ENCODE measurements at regions of chr6 and their contacts with region 1.

Region 1: GRCh38 chr6:100479179-100480035 is 14.7 kb upstream of the SIM1 start:
- DNase-seq: peak; percentile 54
- ATAC-seq: peak; percentile 81
- H3K4me3 ChIP-seq: no peak overlapping the region
- H3K27ac ChIP-seq: no peak overlapping the region
- H3K4me1 ChIP-seq: peaks cover 0 to 8% of the 10 kb centered on the region in 2 experiments; a peak in 2 of 4 replicates
- H3K27me3 ChIP-seq: no peaks in the 10 kb centered on the region
- CTCF ChIP-seq: peak; percentile 61 to 83 (median 82)
- POLR2A ChIP-seq: no peak
- RAD21 ChIP-seq: peak; percentile 90

Region 2: GRCh38 chr6:99588618-99589289 is 890.7 kb before region 1 on chr6:
- CTCF ChIA-PET with region 1: no interaction called
- POLR2A ChIA-PET with region 1: no interaction called
- RAD21 ChIA-PET with region 1: no interaction called
- intact Hi-C with region 1: no loop called
- DNase-seq: no peak
- ATAC-seq: no peak
- H3K4me3 ChIP-seq: no peak overlapping the region
- H3K27ac ChIP-seq: no peak overlapping the region
- H3K4me1 ChIP-seq: no peaks in the 10 kb centered on the region
- H3K27me3 ChIP-seq: no peaks in the 10 kb centered on the region; the same call in 1 of the 2 replicates
- CTCF ChIP-seq: no peak
- POLR2A ChIP-seq: no peak
- RAD21 ChIP-seq: no peak

Region 3: DNA sequence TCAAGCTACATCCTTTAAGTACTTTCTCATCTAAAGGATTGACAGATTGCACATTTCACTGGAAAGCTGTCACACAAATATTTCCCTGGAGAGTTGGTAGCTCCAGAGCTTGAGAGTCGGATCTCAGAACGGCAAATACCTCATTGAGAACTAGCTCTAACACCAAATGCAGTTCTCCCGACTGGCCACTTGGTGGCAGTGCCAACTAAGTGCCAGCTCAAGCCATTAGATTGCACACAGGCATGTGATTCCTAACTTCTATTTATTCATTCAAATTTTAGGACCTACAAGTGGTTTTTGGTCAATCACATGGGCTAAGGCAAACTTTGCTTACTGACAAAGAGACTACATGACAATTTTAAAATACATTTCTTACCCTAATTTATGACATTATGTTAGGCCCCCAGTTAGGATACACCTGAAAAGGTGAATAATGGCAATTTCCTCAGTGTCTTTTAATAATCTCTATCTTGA is 477.5 kb before region 1 on chr6:
- CTCF ChIA-PET with region 1: no interaction called
- POLR2A ChIA-PET with region 1: no interaction called
- RAD21 ChIA-PET with region 1: no interaction called
- intact Hi-C with region 1: loop called (anchors 5 kb)
- DNase-seq: peak; percentile 29
- ATAC-seq: peak; percentile 89
- H3K4me3 ChIP-seq: no peak overlapping the region
- H3K27ac ChIP-seq: no peak overlapping the region
- H3K4me1 ChIP-seq: no peaks in the 10 kb centered on the region
- H3K27me3 ChIP-seq: no peaks in the 10 kb centered on the region
- CTCF ChIP-seq: peak; percentile 66 to 93 (median 90); a peak in 5 of 6 replicates
- POLR2A ChIP-seq: no peak
- RAD21 ChIP-seq: peak; percentile 81

Region 4: GRCh38 chr6:100176311-100176950 is 303.0 kb before region 1 on chr6:
- CTCF ChIA-PET with region 1: interaction called, 6 read pairs
- POLR2A ChIA-PET with region 1: no interaction called
- RAD21 ChIA-PET with region 1: no interaction called
- intact Hi-C with region 1: loop called (anchors 2 kb)
- DNase-seq: peak; percentile 8
- ATAC-seq: peak; percentile 82
- H3K4me3 ChIP-seq: no peak overlapping the region
- H3K27ac ChIP-seq: no peak overlapping the region
- H3K4me1 ChIP-seq: peaks cover 5 to 20% of the 10 kb centered on the region in 2 experiments; a peak in 2 of 4 replicates
- H3K27me3 ChIP-seq: no peaks in the 10 kb centered on the region
- CTCF ChIP-seq: peak; percentile 39 to 46 (median 39); a peak in 4 of 6 replicates
- POLR2A ChIP-seq: no peak
- RAD21 ChIP-seq: peak; percentile 57

Region 5: DNA sequence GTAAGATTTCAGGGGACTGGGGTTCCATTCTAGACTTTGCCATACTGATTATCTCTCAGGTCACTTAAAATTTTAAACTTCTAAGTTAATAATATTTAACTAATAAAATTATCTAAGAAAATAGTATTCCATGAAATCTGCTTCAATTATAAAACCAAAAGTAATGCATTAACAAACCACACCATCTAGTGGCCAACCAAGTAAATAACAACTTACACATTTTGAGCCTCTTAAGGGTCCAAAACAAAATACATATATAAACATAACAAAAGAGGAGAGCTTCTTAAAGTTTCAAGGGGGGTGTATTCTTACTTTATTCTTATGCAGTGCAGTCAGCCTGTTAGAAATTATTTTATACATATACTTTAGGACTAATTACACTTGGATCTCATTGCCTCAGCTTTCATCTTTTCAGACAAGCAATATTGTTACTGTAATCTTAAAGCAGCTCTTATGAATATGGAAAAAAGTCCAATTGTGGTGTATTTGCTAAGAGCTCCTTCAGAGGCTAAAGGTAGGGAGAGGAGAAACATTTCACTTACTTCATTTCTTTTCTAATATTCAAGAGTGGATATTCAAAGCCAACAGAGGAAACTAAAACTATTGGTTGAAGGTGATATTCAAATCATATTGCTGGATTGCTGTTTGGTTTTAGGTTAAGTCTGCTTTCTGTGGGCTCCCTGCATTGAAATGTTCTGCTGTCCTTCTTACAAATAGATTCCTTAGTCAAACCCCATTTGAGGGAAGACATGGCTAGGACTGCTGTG is 185.1 kb after region 1 on chr6:
- CTCF ChIA-PET with region 1: no interaction called
- POLR2A ChIA-PET with region 1: no interaction called
- RAD21 ChIA-PET with region 1: no interaction called
- intact Hi-C with region 1: loop called (anchors 5 kb)
- DNase-seq: no peak
- ATAC-seq: no peak
- H3K4me3 ChIP-seq: no peak overlapping the region
- H3K27ac ChIP-seq: no peak overlapping the region
- H3K4me1 ChIP-seq: peaks cover 0 to 8% of the 10 kb centered on the region in 2 experiments; a peak in 1 of 4 replicates
- H3K27me3 ChIP-seq: no peaks in the 10 kb centered on the region
- CTCF ChIP-seq: peak; percentile 40 to 52 (median 42); a peak in 5 of 6 replicates
- POLR2A ChIP-seq: no peak
- RAD21 ChIP-seq: peak; percentile 53; the same call in 1 of the 2 replicates

Measured in HCT116 (cell line).